ENCODE measurements at regions of chr21 and their contacts with region 1.

Region 1: GRCh38 chr21:46551636-46552241 is 53.1 kb downstream of the S100B start:
- DNase-seq: peak; percentile 16 to 40 (median 30)
- ATAC-seq: peak; percentile 49
- H3K4me3 ChIP-seq: peak overlapping the region; percentile 22
- H3K4me3 Mint-ChIP-seq: peak overlapping the region; percentile 60 to 94 (median 78)
- H3K27ac ChIP-seq: peak overlapping the region; percentile 83
- H3K27ac Mint-ChIP-seq: peak overlapping the region; percentile 84 to 100 (median 99)
- H3K4me1 ChIP-seq: peaks cover 48 to 77% of the 10 kb centered on the region in 2 donors
- H3K4me1 Mint-ChIP-seq: peaks cover 40 to 95% (median 80%) of the 10 kb centered on the region in 7 donors
- H3K27me3 ChIP-seq: no peaks in the 10 kb centered on the region
- H3K27me3 Mint-ChIP-seq: no peaks in the 10 kb centered on the region

Region 2: DNA sequence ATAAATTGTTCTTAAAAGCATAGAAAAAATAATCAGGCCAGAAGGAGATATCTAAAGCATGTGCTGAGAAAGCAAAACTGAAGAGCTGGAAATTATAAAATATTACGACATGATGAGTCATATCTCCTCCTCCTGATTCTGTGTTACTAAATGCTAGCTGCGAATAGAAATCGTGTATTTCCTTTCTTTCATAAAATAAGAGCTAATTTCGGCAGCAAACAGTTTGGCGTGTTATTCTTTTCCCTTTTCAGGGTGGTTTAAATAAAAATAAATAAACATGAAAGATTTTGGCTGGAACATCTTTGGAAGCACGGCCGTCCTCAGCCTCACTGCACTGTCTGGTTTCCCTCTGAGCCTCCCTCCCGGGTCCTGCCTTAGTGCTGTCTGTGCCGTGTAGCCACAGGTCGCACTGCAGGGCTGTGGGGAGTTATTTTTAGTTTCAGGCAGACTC is 1421.4 kb before region 1 on chr21:
- CTCF ChIA-PET with region 1: no interaction called
- POLR2A ChIA-PET with region 1: no interaction called
- intact Hi-C with region 1: no loop called
- DNase-seq: no peak
- ATAC-seq: no peak
- H3K4me3 ChIP-seq: no peak overlapping the region
- H3K4me3 Mint-ChIP-seq: no peak overlapping the region
- H3K27ac ChIP-seq: no peak overlapping the region
- H3K27ac Mint-ChIP-seq: peak overlapping the region in 1 of 9 donors; percentile 33
- H3K4me1 ChIP-seq: peaks cover 0 to 7% of the 10 kb centered on the region in 2 donors
- H3K4me1 Mint-ChIP-seq: peaks cover 18 to 34% (median 27%) of the 10 kb centered on the region in 7 donors
- H3K27me3 ChIP-seq: no peaks in the 10 kb centered on the region
- H3K27me3 Mint-ChIP-seq: no peaks in the 10 kb centered on the region

Region 3: GRCh38 chr21:46144464-46145070 is 407.2 kb before region 1 on chr21:
- CTCF ChIA-PET with region 1: no interaction called
- POLR2A ChIA-PET with region 1: no interaction called
- intact Hi-C with region 1: loop called in 1 of 2 experiments (anchors 5 kb)
- DNase-seq: no peak
- ATAC-seq: no peak
- H3K4me3 ChIP-seq: no peak overlapping the region
- H3K4me3 Mint-ChIP-seq: peak overlapping the region in 5 of 10 donors; percentile 29 to 89 (median 80)
- H3K27ac ChIP-seq: no peak overlapping the region
- H3K27ac Mint-ChIP-seq: peak overlapping the region in 6 of 9 donors; percentile 33 to 92 (median 59)
- H3K4me1 ChIP-seq: no peaks in the 10 kb centered on the region
- H3K4me1 Mint-ChIP-seq: peaks cover 6 to 13% (median 8%) of the 10 kb centered on the region in 7 donors
- H3K27me3 ChIP-seq: no peaks in the 10 kb centered on the region
- H3K27me3 Mint-ChIP-seq: no peaks in the 10 kb centered on the region

Region 4: GRCh38 chr21:46458315-46459023 is 93.3 kb before region 1 on chr21 and contains the start of gene DIP2A:
- CTCF ChIA-PET with region 1: interaction called, 3 read pairs
- POLR2A ChIA-PET with region 1: no interaction called
- intact Hi-C with region 1: loop called in 1 of 2 experiments (anchors 2 kb)
- DNase-seq: peak; percentile 93 to 97 (median 96)
- ATAC-seq: peak; percentile 98
- H3K4me3 ChIP-seq: peak within 1 kb of the TSS; percentile 81
- H3K4me3 Mint-ChIP-seq: peak within 1 kb of the TSS; percentile 86 to 96 (median 92)
- H3K27ac ChIP-seq: peak within 1 kb of the TSS; percentile 94
- H3K27ac Mint-ChIP-seq: peak within 1 kb of the TSS; percentile 85 to 97 (median 91)
- H3K4me1 ChIP-seq: peaks cover 4 to 17% of the 10 kb centered on the region in 2 donors
- H3K4me1 Mint-ChIP-seq: peaks cover 28 to 62% (median 48%) of the 10 kb centered on the region in 7 donors
- H3K27me3 ChIP-seq: no peaks in the 10 kb centered on the region
- H3K27me3 Mint-ChIP-seq: no peaks in the 10 kb centered on the region
- total RNA-seq, gene DIP2A: 54.7 to 118 (median 108) TPM

Region 5: DNA sequence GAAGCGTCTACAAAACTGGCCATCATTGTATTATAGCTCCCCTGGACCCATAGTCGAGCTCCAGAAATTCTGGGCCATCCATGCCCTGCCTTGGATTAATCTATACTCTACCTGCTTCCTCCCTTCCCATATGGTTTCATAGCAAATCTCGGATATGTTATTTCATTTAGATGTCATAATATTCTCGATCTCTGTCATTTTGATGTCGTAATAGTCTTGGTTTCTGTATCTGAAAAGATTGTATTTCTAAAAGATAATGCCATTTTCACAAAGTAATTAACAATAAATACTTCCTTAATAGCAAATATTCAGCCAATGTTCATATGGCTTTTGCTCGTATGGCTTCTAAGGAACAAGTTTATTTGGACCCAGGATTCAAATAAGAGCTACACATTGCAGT is 57.9 kb before region 1 on chr21:
- CTCF ChIA-PET with region 1: no interaction called
- POLR2A ChIA-PET with region 1: no interaction called
- intact Hi-C with region 1: no loop called
- DNase-seq: no peak
- ATAC-seq: no peak
- H3K4me3 ChIP-seq: no peak overlapping the region
- H3K4me3 Mint-ChIP-seq: no peak overlapping the region
- H3K27ac ChIP-seq: no peak overlapping the region
- H3K27ac Mint-ChIP-seq: peak overlapping the region in 1 of 9 donors; percentile 33
- H3K4me1 ChIP-seq: no peaks in the 10 kb centered on the region
- H3K4me1 Mint-ChIP-seq: peaks cover 8 to 40% (median 21%) of the 10 kb centered on the region in 7 donors
- H3K27me3 ChIP-seq: no peaks in the 10 kb centered on the region
- H3K27me3 Mint-ChIP-seq: no peaks in the 10 kb centered on the region

Region 6: GRCh38 chr21:46532080-46532479 is 19.7 kb before region 1 on chr21:
- CTCF ChIA-PET with region 1: interaction called, 10 read pairs
- POLR2A ChIA-PET with region 1: interaction called, 14 read pairs
- intact Hi-C with region 1: loop called in 1 of 2 experiments (anchors 1 kb)
- DNase-seq: peak in 6 of 9 donors; percentile 44 to 69 (median 54)
- ATAC-seq: peak; percentile 74
- H3K4me3 ChIP-seq: no peak overlapping the region
- H3K4me3 Mint-ChIP-seq: peak overlapping the region in 7 of 10 donors; percentile 41 to 77 (median 63)
- H3K27ac ChIP-seq: peak overlapping the region; percentile 32
- H3K27ac Mint-ChIP-seq: peak overlapping the region; percentile 42 to 97 (median 91)
- H3K4me1 ChIP-seq: peaks cover 0 to 14% of the 10 kb centered on the region in 2 donors
- H3K4me1 Mint-ChIP-seq: peaks cover 7 to 69% (median 62%) of the 10 kb centered on the region in 7 donors
- H3K27me3 ChIP-seq: no peaks in the 10 kb centered on the region
- H3K27me3 Mint-ChIP-seq: no peaks in the 10 kb centered on the region

Region 7: GRCh38 chr21:46569081-46569480 is 17.3 kb after region 1 on chr21:
- CTCF ChIA-PET with region 1: no interaction called
- POLR2A ChIA-PET with region 1: interaction called, 6 read pairs
- intact Hi-C with region 1: loop called in 1 of 2 experiments (anchors 2 kb)
- DNase-seq: no peak
- ATAC-seq: no peak
- H3K4me3 ChIP-seq: no peak overlapping the region
- H3K4me3 Mint-ChIP-seq: peak overlapping the region in 1 of 10 donors; percentile 71
- H3K27ac ChIP-seq: no peak overlapping the region
- H3K27ac Mint-ChIP-seq: peak overlapping the region in 6 of 9 donors; percentile 14 to 96 (median 52)
- H3K4me1 ChIP-seq: peaks cover 0 to 17% of the 10 kb centered on the region in 2 donors
- H3K4me1 Mint-ChIP-seq: peaks cover 10 to 78% (median 61%) of the 10 kb centered on the region in 7 donors
- H3K27me3 ChIP-seq: no peaks in the 10 kb centered on the region
- H3K27me3 Mint-ChIP-seq: no peaks in the 10 kb centered on the region

Measured in naive thymus-derived CD4-positive, alpha-beta T cell (primary cell).